Activated naive CD4-positive, alpha-beta T cell treated with anti-CD3 and anti-CD28 coated beads for 36 hours (primary cell): ENCODE measurements at regions of chr20 and their contacts with region 1.

Region 1: DNA sequence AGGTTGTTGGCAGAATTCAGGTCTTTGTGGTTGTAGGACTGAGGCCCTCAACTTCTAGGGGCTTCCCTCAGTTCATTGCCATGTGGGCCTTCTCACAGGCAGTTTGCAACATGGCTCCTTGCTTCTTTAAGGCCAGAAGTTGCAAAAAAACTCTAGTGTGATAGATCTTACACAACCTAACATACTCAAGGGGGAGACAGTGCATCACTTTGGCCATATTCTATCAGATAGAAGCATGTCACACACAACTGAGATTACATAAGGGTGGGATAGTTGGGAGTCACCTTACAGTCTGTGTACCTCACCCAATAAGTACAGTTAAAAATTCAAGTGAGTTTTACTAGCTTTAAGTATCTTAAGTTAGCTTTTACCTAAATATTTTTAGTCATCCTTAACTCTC is 1.6 kb downstream of the SIRPD start:
- DNase-seq: no peak
- H3K4me3 Mint-ChIP-seq: no peak overlapping the region
- H3K27ac Mint-ChIP-seq: no peak overlapping the region
- H3K4me1 Mint-ChIP-seq: peaks cover 3% of the 10 kb centered on the region
- H3K27me3 Mint-ChIP-seq: no peaks in the 10 kb centered on the region

Region 2: GRCh38 chr20:1524004-1524403 is 31.9 kb before region 1 on chr20:
- CTCF ChIA-PET with region 1: no interaction called
- intact Hi-C with region 1: no loop called
- DNase-seq: no peak
- H3K4me3 Mint-ChIP-seq: no peak overlapping the region
- H3K27ac Mint-ChIP-seq: no peak overlapping the region
- H3K4me1 Mint-ChIP-seq: peaks cover 3% of the 10 kb centered on the region
- H3K27me3 Mint-ChIP-seq: peaks cover 2% of the 10 kb centered on the region

Region 3: DNA sequence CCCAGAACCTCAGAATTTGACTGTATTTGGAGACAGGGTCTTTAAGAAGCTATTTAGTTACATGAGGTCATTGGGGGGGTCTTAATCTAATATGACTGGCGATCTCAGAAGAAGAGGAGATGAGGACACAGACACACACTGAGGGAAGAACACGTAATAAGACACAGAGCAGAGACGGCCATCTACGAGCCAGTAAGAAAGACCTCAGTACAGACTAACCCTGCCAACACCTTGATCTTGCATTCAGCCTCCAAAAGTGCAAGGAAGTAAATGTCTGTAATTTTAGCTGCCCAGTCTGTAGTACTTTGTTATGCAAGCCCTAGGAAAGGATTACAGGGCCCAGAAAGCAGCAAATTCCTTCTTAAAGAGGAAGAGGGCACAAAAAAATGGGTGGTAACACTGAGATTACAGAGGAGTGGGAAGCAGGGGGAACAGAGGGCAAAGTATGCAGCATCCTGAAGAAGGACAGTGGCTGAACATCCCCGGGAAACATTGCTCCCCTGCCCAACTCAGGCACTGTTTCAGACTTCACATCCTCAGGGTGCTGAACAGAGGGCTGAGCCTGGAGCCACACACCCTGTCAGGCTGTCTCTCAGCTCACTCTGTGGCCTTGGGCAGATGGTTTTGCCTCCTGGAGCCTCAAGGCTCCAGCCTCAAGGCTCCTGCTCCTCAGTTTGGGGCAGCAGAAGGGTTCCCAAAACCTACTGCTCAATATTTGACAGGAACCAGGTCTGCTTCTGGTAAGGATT is 129.5 kb after region 1 on chr20:
- CTCF ChIA-PET with region 1: no interaction called
- intact Hi-C with region 1: no loop called
- DNase-seq: peak; percentile 56
- H3K4me3 Mint-ChIP-seq: peak overlapping the region; percentile 83
- H3K27ac Mint-ChIP-seq: peak overlapping the region; percentile 95
- H3K4me1 Mint-ChIP-seq: peaks cover 82% of the 10 kb centered on the region
- H3K27me3 Mint-ChIP-seq: no peaks in the 10 kb centered on the region

Region 4: DNA sequence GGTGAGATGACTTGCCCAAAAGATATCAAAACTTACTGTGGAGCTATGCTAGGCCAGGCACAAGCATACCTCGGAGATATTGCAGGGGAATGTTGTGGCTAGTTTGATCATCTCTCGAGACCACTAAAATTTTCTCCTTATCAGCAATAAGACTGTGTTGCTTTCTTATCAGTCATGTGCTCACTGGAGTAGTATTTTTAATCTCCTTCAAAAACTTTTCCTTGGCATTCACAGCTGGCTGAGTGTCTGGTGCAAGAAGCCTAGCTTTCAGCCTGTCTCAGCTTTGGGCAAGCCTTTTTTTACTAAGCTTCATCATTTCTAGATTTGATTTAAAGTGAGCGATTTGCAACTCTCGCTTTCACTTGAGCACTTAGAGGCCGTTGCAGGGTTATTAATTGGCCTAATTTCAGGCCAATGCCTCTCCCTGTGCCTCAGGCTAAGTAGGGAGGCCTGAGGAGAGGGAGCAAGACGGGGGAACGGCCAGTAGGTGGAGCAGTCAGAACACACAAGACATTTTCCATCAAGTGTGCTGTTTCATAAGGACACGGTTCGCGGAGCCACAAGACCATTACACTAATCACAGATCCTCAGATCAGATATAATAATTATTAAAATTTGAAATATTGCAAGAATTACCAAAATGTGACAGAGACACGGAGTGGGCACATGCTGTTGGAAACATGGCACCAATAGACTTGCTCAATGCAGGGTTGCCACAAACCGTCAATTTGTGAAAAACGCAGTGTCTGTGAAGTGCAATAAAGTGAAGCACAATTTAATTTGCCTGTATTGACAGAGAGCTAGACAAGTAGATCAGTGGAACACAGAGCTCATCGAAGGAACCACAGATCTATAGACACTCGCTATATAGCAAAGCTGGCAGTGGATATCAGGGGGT is 208.4 kb after region 1 on chr20:
- CTCF ChIA-PET with region 1: interaction called, 15 read pairs
- intact Hi-C with region 1: no loop called
- DNase-seq: peak; percentile 82
- H3K4me3 Mint-ChIP-seq: no peak overlapping the region
- H3K27ac Mint-ChIP-seq: no peak overlapping the region
- H3K4me1 Mint-ChIP-seq: peaks cover 2% of the 10 kb centered on the region
- H3K27me3 Mint-ChIP-seq: no peaks in the 10 kb centered on the region